ENCODE measurements at regions of chr10 and their contacts with region 1.

Region 1: DNA sequence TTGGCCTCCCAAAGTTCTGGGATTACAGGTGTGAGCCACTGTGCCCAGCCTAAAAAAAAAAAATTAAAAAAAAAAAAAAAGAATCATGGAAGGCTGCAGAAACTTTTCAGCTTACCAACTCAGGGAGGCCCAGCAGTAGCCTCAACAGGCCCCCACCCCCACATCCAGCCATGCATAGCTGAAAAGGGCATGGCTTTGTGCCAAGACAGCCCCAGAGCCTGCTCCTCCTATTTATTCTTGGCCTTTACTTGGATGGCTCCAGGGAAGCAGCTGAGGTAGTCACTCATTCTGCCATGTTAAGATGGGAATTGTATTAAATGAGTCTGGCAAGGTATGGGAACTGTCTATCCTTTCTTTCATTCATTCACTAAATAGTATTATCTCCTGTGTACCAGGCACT is 13.7 kb upstream of the CNNM2 start:
- DNase-seq: no peak
- H3K4me3 ChIP-seq: no peak overlapping the region
- H3K27ac ChIP-seq: no peak overlapping the region
- H3K4me1 ChIP-seq: no peaks in the 10 kb centered on the region
- H3K27me3 ChIP-seq: no peaks in the 10 kb centered on the region
- CTCF ChIP-seq: no peak

Region 2: DNA sequence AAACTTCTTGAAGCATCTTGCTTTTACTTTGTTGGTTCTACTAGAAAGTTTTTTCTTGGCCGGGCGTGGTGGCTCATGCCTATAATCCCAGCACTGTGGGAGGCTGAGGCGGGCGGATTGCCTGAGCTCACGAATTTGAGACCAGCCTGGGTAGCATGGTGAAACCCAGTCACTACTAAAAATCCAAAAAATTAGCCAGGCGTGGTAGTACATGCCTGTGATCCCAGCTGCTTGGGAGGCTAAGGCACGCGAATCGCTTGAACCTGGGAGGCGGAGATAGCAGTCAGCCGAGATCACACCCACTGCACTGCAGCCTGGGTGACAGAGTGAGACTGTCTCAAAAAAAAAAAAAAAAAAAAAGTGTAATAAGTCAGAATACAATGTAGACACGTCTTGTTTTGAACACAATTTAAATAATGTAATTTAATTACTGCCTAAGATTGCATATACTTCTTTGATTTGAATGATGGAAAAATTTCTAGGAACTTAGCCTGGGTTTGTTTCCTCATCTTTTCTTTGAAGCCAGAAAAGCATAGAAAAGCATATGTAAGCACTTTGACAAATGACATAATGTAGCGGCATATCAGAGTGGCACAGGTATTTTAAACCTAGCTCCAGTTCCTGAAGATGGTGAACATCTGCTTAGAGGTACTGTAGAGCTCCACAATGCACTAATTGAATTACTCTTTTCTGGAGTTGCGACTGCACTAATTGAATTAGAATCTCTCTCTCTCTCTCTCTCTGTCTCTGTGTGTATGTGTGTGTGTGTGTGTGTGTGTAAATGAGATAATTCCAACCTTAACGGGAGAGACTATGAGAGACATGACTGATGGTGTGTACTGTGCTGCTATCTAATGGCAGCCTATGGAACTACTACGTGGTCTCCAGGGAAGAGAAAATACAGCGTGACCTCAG is 1462.5 kb before region 1 on chr10:
- intact Hi-C with region 1: no loop called
- DNase-seq: no peak
- H3K4me3 ChIP-seq: no peak overlapping the region
- H3K27ac ChIP-seq: no peak overlapping the region
- H3K4me1 ChIP-seq: peaks cover 0 to 8% (median 0%) of the 10 kb centered on the region in 4 donors
- H3K27me3 ChIP-seq: no peaks in the 10 kb centered on the region
- CTCF ChIP-seq: peak; percentile 43 to 53

Region 3: GRCh38 chr10:102467971-102468438 is 436.3 kb before region 1 on chr10:
- intact Hi-C with region 1: no loop called
- DNase-seq: no peak
- H3K4me3 ChIP-seq: no peak overlapping the region
- H3K27ac ChIP-seq: no peak overlapping the region
- H3K4me1 ChIP-seq: no peaks in the 10 kb centered on the region
- H3K27me3 ChIP-seq: no peaks in the 10 kb centered on the region
- CTCF ChIP-seq: no peak

Region 4: DNA sequence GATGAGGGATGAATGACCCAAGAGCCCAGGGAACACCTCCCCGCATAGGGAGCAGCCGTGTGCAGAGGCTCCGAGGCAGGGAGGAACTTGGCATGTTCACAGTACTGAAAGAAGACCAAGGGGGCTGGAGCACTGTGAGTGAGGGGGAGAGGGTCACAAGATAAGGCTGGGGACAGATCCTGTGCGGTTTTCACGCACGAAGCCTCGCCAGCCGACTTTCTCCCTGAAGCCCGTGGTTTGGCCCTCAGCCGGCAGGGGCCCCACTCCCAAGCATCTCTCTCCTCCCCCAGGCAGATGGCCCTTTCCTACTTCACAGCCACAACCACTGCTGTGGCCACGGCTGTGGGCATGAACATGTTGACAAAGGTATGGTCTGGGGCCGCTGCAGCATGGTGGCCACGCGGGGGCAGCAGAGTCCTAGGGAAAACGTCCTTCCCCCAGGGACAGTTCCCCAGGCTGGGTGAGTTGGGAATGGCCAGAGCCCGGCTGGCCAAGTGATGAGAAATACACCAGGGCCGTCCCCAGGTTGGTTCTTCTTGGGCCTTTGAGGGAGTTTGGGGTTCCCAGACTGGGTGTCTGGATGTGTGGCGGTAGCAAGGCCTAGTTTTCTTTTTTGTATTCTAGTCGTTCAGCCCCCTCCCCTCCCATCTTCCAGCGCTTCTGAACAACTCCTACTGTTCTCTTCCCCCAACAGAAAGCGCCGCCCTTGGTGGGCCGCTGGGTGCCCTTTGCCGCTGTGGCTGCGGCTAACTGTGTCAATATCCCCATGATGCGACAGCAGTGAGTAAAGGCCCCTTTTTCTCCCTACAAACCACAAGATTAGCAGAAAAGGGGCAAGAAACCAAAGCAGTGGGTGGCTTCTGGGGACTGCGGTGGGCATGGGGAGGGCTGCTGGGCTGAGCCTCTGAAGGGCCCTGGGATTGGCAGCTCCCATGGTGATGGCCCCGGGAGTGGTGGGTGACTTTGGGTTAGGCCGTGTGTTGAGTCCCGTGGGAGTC is 175.0 kb before region 1 on chr10:
- intact Hi-C with region 1: loop called (anchors 1 kb)
- DNase-seq: peak; percentile 88 to 93
- H3K4me3 ChIP-seq: no peak overlapping the region
- H3K27ac ChIP-seq: no peak overlapping the region
- H3K4me1 ChIP-seq: peaks cover 0 to 7% (median 0%) of the 10 kb centered on the region in 4 donors
- H3K27me3 ChIP-seq: no peaks in the 10 kb centered on the region
- CTCF ChIP-seq: peak; percentile 90 to 96

Region 5: DNA sequence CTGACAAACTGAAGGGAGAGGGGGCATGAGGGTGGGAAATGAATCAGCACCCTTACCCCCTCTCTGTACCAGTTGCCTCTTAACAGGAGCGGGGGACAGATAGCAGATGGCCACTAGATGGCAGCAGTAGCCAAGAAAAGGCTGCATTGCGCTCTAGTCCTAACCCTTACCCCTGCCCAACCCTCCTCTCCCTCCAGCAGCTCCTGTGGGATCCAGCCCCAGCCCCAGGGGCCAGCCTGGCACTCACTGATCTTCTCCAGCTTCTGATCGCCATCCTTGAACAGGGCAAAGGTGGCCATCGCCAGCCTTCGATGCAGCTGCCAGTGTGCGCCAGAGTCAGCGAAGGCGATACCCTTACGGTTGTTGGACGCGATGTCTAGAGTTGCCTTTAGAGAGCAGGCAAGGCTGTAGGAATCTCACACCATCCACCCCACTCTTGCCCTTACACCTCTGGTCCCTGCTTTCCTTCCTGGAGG is 69.3 kb before region 1 on chr10:
- intact Hi-C with region 1: loop called (anchors 5 kb)
- DNase-seq: peak; percentile 56 to 85
- H3K4me3 ChIP-seq: no peak overlapping the region
- H3K27ac ChIP-seq: no peak overlapping the region
- H3K4me1 ChIP-seq: peaks cover 0 to 14% (median 10%) of the 10 kb centered on the region in 4 donors
- H3K27me3 ChIP-seq: no peaks in the 10 kb centered on the region
- CTCF ChIP-seq: peak; percentile 80 to 84

Region 6: DNA sequence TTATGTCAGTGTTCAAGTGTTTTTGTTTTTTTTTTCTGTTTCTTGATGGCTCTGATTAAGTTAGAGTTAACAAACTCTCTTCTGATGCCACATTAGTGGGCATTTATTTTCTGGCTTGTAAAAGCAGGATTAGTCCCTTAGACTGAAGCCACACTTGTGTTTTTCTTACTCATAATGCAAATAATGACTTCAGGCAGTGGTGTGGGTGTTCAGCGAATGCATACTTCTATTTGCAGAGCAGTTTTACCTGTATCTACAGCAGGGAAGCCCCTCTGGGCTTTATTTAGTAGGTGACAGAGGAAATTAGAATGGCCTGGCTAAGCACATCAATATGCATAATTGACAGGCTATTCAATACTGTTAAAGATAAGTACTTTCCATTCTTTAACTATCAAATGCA is 93.7 kb after region 1 on chr10:
- intact Hi-C with region 1: no loop called
- DNase-seq: no peak
- H3K4me3 ChIP-seq: no peak overlapping the region
- H3K27ac ChIP-seq: no peak overlapping the region
- H3K4me1 ChIP-seq: peaks cover 0 to 32% (median 0%) of the 10 kb centered on the region in 4 donors
- H3K27me3 ChIP-seq: no peaks in the 10 kb centered on the region
- CTCF ChIP-seq: no peak